H1 (cell line): ENCODE measurements at regions of chr10 and their contacts with region 1.

Region 1: GRCh38 chr10:21495752-21496342 is 29.6 kb downstream of the SKIDA1 start:
- DNase-seq: peak; percentile 85 to 99
- H3K4me3 ChIP-seq: peak overlapping the region; percentile 48 to 88 (median 70)
- H3K27ac ChIP-seq: peak overlapping the region; percentile 86
- H3K4me1 ChIP-seq: peaks cover under 1 to 29% (median 16%) of the 10 kb centered on the region in 4 experiments
- H3K27me3 ChIP-seq: peaks cover 5 to 24% (median 15%) of the 10 kb centered on the region in 4 experiments; a peak in 6 of 7 replicates
- CTCF ChIP-seq: peak; percentile 91 to 96 (median 94)
- EP300 ChIP-seq: peak in 1 of 2 experiments; percentile 77; a peak in 1 of 3 replicates
- POLR2A ChIP-seq: peak; percentile 62 to 79
- RAD21 ChIP-seq: peak; percentile 94 to 96

Region 2: DNA sequence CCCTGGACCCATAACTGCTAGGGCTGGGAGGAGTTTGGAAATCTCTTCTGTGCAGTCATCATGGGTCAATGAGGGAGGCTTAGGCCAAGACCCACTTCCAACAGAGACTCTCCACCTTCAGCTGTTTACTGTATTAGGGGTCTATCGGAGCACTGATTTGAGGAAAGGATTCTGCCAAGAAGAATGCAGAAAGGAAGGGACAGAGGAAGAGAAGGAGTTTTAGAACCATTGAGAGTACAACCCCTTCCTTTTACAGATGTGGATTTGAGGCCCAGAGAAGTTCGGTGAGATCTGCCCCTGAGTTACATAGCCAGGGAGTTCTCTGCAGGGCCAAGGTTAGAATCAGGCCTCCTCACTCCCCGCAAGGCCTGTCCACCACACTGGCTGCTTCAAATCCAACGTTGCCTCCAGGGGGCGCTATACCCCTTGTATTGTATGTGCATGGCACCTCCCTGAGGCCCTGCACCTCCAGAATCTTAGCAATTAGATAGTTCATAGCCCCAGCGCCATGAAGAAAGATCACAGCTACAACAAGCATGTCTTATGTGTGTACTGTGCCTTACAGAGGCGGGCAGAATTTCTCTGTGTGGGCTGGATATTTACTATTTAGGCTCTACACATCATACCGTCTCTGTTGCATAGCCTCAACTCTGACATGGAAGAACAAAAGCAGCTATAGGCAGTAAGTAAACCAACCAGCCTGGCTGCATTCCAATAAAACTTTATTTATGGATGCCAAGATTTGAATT is 217.2 kb before region 1 on chr10:
- CTCF ChIA-PET with region 1: interaction called, 46 read pairs
- POLR2A ChIA-PET with region 1: interaction called, 11 read pairs
- DNase-seq: peak; percentile 94 to 100
- H3K4me3 ChIP-seq: no peak overlapping the region
- H3K27ac ChIP-seq: no peak overlapping the region
- H3K4me1 ChIP-seq: peaks cover 6 to 20% (median 17%) of the 10 kb centered on the region in 4 experiments; a peak in 6 of 7 replicates
- H3K27me3 ChIP-seq: no peaks in the 10 kb centered on the region
- CTCF ChIP-seq: peak; percentile 84 to 95 (median 90)
- EP300 ChIP-seq: no peak
- POLR2A ChIP-seq: no peak
- RAD21 ChIP-seq: peak; percentile 97 to 98

Region 3: DNA sequence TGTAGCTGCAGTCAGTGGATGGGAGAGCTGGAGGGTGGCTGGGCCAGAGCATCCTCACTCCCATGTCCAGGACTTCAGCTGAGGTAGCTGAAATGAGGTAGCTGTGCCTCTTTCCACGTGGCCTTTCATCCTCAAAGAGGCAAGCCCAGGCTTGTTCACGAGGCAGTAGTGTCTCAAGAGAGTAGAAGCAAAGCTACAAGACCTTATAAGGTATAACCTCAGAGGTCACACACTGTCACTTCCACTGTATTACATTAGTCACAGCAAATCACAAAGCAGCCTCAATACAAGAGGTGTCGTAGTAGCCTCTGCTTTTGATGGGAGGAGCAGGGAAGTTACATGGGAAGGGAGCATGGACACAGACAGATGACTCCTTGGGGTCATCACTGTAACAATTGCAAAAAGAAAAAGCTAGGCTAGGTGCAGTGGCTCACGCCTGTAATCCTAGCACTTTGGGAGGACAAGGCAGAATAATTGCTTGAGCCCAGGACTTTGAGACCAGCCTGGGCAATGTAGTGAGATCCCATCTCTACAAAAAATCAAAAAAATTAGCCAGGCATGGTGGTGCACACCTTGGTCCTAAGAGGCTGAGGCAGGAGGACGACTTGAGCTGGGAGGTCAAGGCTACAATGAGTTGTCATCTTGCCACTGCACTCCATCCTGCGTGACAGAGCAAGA is 67.9 kb before region 1 on chr10:
- CTCF ChIA-PET with region 1: no interaction called
- POLR2A ChIA-PET with region 1: no interaction called
- DNase-seq: no peak
- H3K4me3 ChIP-seq: no peak overlapping the region
- H3K27ac ChIP-seq: no peak overlapping the region
- H3K4me1 ChIP-seq: no peaks in the 10 kb centered on the region
- H3K27me3 ChIP-seq: no peaks in the 10 kb centered on the region; a peak in 1 of 7 replicates
- CTCF ChIP-seq: no peak
- EP300 ChIP-seq: no peak
- POLR2A ChIP-seq: no peak
- RAD21 ChIP-seq: no peak

Region 4: GRCh38 chr10:21510241-21511074 is 14.6 kb after region 1 on chr10:
- CTCF ChIA-PET with region 1: interaction called, 36 read pairs
- POLR2A ChIA-PET with region 1: interaction called, 322 read pairs
- DNase-seq: peak in 1 of 2 experiments; percentile 81
- H3K4me3 ChIP-seq: peak overlapping the region; percentile 52 to 69 (median 56)
- H3K27ac ChIP-seq: peak overlapping the region; percentile 94
- H3K4me1 ChIP-seq: peaks cover 16 to 56% (median 35%) of the 10 kb centered on the region in 4 experiments; a peak in 6 of 7 replicates
- H3K27me3 ChIP-seq: peaks cover 0 to 5% (median 5%) of the 10 kb centered on the region in 4 experiments; a peak in 3 of 7 replicates
- CTCF ChIP-seq: no peak
- EP300 ChIP-seq: no peak
- POLR2A ChIP-seq: peak; percentile 26 to 60
- RAD21 ChIP-seq: no peak

Region 5: GRCh38 chr10:21516242-21517131 is 20.6 kb after region 1 on chr10:
- CTCF ChIA-PET with region 1: interaction called, 24 read pairs
- POLR2A ChIA-PET with region 1: interaction called, 322 read pairs
- DNase-seq: peak in 1 of 2 experiments; percentile 83
- H3K4me3 ChIP-seq: peak overlapping the region; percentile 66 to 90 (median 83)
- H3K27ac ChIP-seq: no peak overlapping the region
- H3K4me1 ChIP-seq: peaks cover 7 to 34% (median 23%) of the 10 kb centered on the region in 4 experiments; a peak in 6 of 7 replicates
- H3K27me3 ChIP-seq: peaks cover 0 to 3% (median 0%) of the 10 kb centered on the region in 4 experiments; a peak in 2 of 7 replicates
- CTCF ChIP-seq: no peak
- EP300 ChIP-seq: peak in 1 of 2 experiments; percentile 34; a peak in 1 of 3 replicates
- POLR2A ChIP-seq: no peak
- RAD21 ChIP-seq: peak in 1 of 2 experiments; percentile 2; a peak in 1 of 4 replicates

Region 6: GRCh38 chr10:21525367-21526183 is 29.7 kb after region 1 on chr10 and contains the start of gene SKIDA1:
- CTCF ChIA-PET with region 1: interaction called, 6 read pairs
- POLR2A ChIA-PET with region 1: interaction called, 322 read pairs
- DNase-seq: peak in 1 of 2 experiments; percentile 90
- H3K4me3 ChIP-seq: peak within 1 kb of the TSS; percentile 67 to 79 (median 76)
- H3K27ac ChIP-seq: peak within 1 kb of the TSS; percentile 93
- H3K4me1 ChIP-seq: peaks cover 7 to 38% (median 19%) of the 10 kb centered on the region in 4 experiments
- H3K27me3 ChIP-seq: 0 out of 7 replicates have a peak, but pooled peaks cover 0 to 3% (median 0%) of the 10 kb centered on the region in 4 experiments
- CTCF ChIP-seq: no peak
- EP300 ChIP-seq: no peak
- POLR2A ChIP-seq: peak; percentile 76 to 84
- RAD21 ChIP-seq: no peak
- total RNA-seq, gene SKIDA1: 8.0 and 8.2 TPM in 2 replicates

Region 7: GRCh38 chr10:21533467-21534279 is 37.8 kb after region 1 on chr10 and contains the start of gene MLLT10:
- CTCF ChIA-PET with region 1: interaction called, 6 read pairs
- POLR2A ChIA-PET with region 1: interaction called, 322 read pairs
- DNase-seq: peak; percentile 91 to 93
- H3K4me3 ChIP-seq: peak within 1 kb of the TSS; percentile 63 to 72 (median 66)
- H3K27ac ChIP-seq: peak within 1 kb of the TSS; percentile 89
- H3K4me1 ChIP-seq: peaks cover 0 to 9% (median 5%) of the 10 kb centered on the region in 4 experiments; a peak in 5 of 7 replicates
- H3K27me3 ChIP-seq: no peaks in the 10 kb centered on the region
- CTCF ChIP-seq: no peak
- EP300 ChIP-seq: no peak
- POLR2A ChIP-seq: peak; percentile 80 to 83
- RAD21 ChIP-seq: peak in 1 of 2 experiments; percentile 0; a peak in 1 of 4 replicates
- total RNA-seq, gene MLLT10: 53.1 and 56.9 TPM in 2 replicates

Region 8: GRCh38 chr10:21617267-21617666 is 121.4 kb after region 1 on chr10:
- CTCF ChIA-PET with region 1: no interaction called
- POLR2A ChIA-PET with region 1: no interaction called
- DNase-seq: no peak
- H3K4me3 ChIP-seq: no peak overlapping the region
- H3K27ac ChIP-seq: no peak overlapping the region
- H3K4me1 ChIP-seq: no peaks in the 10 kb centered on the region
- H3K27me3 ChIP-seq: no peaks in the 10 kb centered on the region
- CTCF ChIP-seq: no peak
- EP300 ChIP-seq: no peak
- POLR2A ChIP-seq: no peak
- RAD21 ChIP-seq: no peak

Region 9: DNA sequence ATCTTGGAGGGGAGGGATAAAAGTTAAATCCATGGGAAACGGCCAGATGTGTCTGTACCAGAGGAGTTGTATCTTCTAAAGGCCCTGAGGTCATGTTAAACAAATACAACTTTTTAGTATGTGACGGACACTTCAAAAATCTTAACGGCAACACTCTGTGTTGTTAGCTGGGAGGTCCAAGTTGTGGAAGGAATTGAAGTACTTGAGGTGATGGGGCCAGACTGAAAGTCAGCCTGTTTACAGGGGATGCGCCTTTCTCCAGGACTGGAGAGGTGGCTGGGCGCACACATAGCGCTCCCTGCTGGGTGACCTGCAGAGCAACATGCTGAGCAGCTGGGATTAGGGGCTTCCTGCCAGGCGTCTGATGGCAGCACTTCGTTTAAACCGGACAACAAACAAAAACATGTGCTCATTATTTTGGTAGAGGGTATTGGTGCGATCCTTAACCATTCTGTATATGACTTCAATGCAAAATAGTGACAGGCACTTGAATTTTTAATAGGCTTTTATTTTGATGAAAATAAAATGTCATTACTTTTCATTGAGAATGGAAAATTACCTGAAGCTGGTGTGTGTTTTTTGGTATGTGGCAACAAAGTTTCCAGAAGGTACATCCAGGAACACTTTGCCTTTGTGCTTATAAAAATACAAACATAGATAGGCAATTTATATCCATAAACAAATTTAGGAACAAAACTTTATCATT is 236.4 kb after region 1 on chr10:
- CTCF ChIA-PET with region 1: interaction called, 10 read pairs
- POLR2A ChIA-PET with region 1: interaction called, 4 read pairs
- DNase-seq: peak in 1 of 2 experiments; percentile 77
- H3K4me3 ChIP-seq: no peak overlapping the region
- H3K27ac ChIP-seq: no peak overlapping the region
- H3K4me1 ChIP-seq: peaks cover 3 to 6% (median 3%) of the 10 kb centered on the region in 4 experiments; a peak in 5 of 7 replicates
- H3K27me3 ChIP-seq: no peaks in the 10 kb centered on the region
- CTCF ChIP-seq: peak; percentile 75 to 96 (median 96)
- EP300 ChIP-seq: no peak
- POLR2A ChIP-seq: no peak
- RAD21 ChIP-seq: peak; percentile 91 to 93

Region 10: GRCh38 chr10:21813946-21814345 is 318.1 kb after region 1 on chr10:
- CTCF ChIA-PET with region 1: no interaction called
- POLR2A ChIA-PET with region 1: no interaction called
- DNase-seq: no peak
- H3K4me3 ChIP-seq: no peak overlapping the region
- H3K27ac ChIP-seq: no peak overlapping the region
- H3K4me1 ChIP-seq: peaks cover 0 to 6% (median 0%) of the 10 kb centered on the region in 4 experiments; a peak in 1 of 7 replicates
- H3K27me3 ChIP-seq: no peaks in the 10 kb centered on the region
- CTCF ChIP-seq: no peak
- EP300 ChIP-seq: no peak
- POLR2A ChIP-seq: no peak
- RAD21 ChIP-seq: no peak